ENCODE measurements at regions of chr6 and their contacts with region 1.

Region 1: GRCh38 chr6:41053041-41053440 is at the start of gene APOBEC2:
- DNase-seq: peak; percentile 90
- total RNA-seq, gene APOBEC2: 174 TPM

Region 2: DNA sequence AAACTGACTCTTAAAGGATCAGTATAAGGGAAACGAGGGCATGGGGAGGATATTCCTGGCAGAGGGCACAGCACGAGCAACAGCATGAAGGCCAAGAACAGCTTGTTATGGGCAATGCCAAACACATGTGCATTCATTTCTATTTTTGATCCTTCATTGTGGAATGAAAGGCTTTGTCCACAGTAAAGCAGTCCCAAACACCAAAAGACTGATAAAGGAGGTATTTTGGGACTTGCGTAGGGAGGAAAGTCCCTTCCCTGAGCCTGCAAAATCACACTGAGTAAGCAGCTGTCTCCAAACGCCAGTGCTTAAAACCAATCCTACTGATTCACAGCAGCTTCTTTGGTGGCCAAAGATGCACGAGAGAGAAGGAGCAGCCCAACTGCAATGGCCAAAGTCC is 152.2 kb before region 1 on chr6:
- intact Hi-C with region 1: loop called (anchors 1 kb)
- DNase-seq: no peak

Region 3: DNA sequence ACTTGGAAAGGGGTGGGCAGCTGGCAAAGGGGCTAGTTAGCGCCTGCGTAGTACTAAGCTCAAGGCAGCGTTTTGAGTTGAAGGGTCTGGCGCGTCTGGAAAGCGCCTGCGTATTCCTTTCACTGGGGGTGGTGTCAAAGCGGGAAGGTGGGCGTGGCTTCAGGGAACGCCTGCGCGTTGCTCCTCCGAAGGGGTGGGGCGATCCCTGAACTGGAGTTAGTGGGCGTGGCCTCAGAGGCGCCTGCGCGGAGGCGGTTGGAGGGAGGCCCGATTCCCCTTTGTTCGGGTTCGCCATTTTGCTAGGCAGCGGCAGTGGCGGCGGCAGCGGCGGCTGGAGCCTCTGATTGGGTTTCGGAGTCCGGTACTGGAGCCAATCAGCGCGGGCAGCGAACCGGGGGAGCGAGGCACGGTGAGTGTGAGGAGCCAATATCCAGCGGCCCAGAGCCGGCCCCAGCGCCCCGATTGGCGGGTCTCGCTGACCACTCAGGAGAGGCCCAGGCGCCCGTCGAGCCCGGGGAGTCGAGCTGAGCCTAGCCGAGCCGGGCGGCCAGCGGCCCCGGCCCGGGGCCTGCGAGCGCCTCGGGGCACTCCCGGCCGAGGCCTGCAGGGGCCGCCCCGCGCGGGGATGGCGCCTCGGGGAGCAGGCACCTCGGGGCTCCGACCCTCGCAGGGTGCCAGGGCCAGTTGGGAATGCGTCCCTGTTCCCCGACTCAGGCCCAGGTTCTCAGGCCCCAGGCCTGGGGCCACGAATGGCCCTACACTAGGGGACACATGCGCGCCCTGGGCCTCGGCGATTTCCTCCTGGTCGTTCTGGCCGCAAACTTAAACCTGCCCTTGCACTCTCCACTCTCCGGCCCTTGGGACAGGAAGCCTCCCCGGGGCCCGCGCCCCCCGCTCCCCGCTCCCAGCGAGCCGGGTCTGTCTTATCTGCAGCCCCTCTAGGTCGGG is 19.9 kb after region 1 on chr6 and contains the start of gene NFYA:
- intact Hi-C with region 1: loop called (anchors 1 kb)
- DNase-seq: peak; percentile 100
- total RNA-seq, gene NFYA: 12.9 TPM

Measured in cardiac septum (tissue), 1 donor.